ENCODE measurements at regions of chr7 and their contacts with region 1.

Region 1: GRCh38 chr7:116180302-116180701 is 30.0 kb upstream of the TES start:
- DNase-seq: no peak
- ATAC-seq: peak; percentile 88
- H3K4me3 ChIP-seq: no peak overlapping the region
- H3K27ac ChIP-seq: no peak overlapping the region
- H3K4me1 ChIP-seq: no peaks in the 10 kb centered on the region
- H3K27me3 ChIP-seq: no peaks in the 10 kb centered on the region
- CTCF ChIP-seq: peak; percentile 62 to 79 (median 70)
- EP300 ChIP-seq: no peak
- POLR2A ChIP-seq: no peak
- RAD21 ChIP-seq: peak; percentile 85

Region 2: GRCh38 chr7:116138202-116138801 is 42.0 kb before region 1 on chr7:
- CTCF ChIA-PET with region 1: interaction called, 21 read pairs
- POLR2A ChIA-PET with region 1: no interaction called
- RAD21 ChIA-PET with region 1: interaction called, 14 read pairs
- SMC1A ChIA-PET with region 1: interaction called, 7 read pairs
- in situ Hi-C with region 1: no loop called
- intact Hi-C with region 1: no loop called
- DNase-seq: no peak
- ATAC-seq: peak; percentile 99
- H3K4me3 ChIP-seq: no peak overlapping the region
- H3K27ac ChIP-seq: no peak overlapping the region
- H3K4me1 ChIP-seq: no peaks in the 10 kb centered on the region
- H3K27me3 ChIP-seq: no peaks in the 10 kb centered on the region
- CTCF ChIP-seq: peak; percentile 65 to 83 (median 71)
- EP300 ChIP-seq: no peak
- POLR2A ChIP-seq: no peak
- RAD21 ChIP-seq: peak; percentile 99

Region 3: GRCh38 chr7:116165717-116166116 is 14.6 kb before region 1 on chr7:
- CTCF ChIA-PET with region 1: interaction called, 19 read pairs
- POLR2A ChIA-PET with region 1: no interaction called
- RAD21 ChIA-PET with region 1: interaction called, 7 read pairs
- SMC1A ChIA-PET with region 1: interaction called, 6 read pairs
- in situ Hi-C with region 1: no loop called
- intact Hi-C with region 1: no loop called
- DNase-seq: no peak
- ATAC-seq: peak; percentile 83
- H3K4me3 ChIP-seq: no peak overlapping the region
- H3K27ac ChIP-seq: peak overlapping the region; percentile 38
- H3K4me1 ChIP-seq: peaks cover 46% of the 10 kb centered on the region
- H3K27me3 ChIP-seq: no peaks in the 10 kb centered on the region
- CTCF ChIP-seq: no peak
- EP300 ChIP-seq: peak; percentile 34 to 71; a peak in 2 of 4 replicates
- POLR2A ChIP-seq: no peak
- RAD21 ChIP-seq: no peak

Region 4: DNA sequence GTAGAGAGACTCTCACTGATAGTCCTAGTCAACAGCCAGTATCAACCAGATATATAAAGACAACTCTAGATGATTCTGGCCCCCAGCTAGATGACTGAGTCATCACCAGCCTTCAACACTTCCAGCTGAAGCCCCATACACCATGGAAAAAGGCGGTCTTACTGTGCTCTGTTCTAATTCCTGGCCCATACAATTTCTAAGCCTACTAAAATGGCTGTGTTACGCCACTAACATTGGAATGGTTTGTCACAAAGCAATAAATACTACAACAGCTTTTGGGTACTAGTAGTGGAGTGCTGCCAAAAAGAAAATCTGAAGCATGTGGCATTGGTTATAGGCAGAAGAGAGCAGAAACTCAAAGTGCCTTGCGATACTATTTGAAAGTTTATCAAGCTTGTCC is 17.1 kb after region 1 on chr7:
- CTCF ChIA-PET with region 1: interaction called, 10 read pairs
- POLR2A ChIA-PET with region 1: no interaction called
- RAD21 ChIA-PET with region 1: interaction called, 3 read pairs
- SMC1A ChIA-PET with region 1: interaction called, 4 read pairs
- in situ Hi-C with region 1: no loop called
- intact Hi-C with region 1: no loop called
- DNase-seq: no peak
- ATAC-seq: no peak
- H3K4me3 ChIP-seq: no peak overlapping the region
- H3K27ac ChIP-seq: no peak overlapping the region
- H3K4me1 ChIP-seq: no peaks in the 10 kb centered on the region
- H3K27me3 ChIP-seq: no peaks in the 10 kb centered on the region; a peak in 1 of 4 replicates
- CTCF ChIP-seq: no peak
- EP300 ChIP-seq: no peak
- POLR2A ChIP-seq: no peak
- RAD21 ChIP-seq: no peak

Region 5: GRCh38 chr7:116211006-116211912 is 31.0 kb after region 1 on chr7:
- CTCF ChIA-PET with region 1: interaction called, 9 read pairs
- POLR2A ChIA-PET with region 1: no interaction called
- RAD21 ChIA-PET with region 1: interaction called, 5 read pairs
- SMC1A ChIA-PET with region 1: interaction called, 3 read pairs
- in situ Hi-C with region 1: no loop called
- intact Hi-C with region 1: loop called (anchors 2 kb)
- DNase-seq: peak; percentile 59
- ATAC-seq: peak; percentile 78
- H3K4me3 ChIP-seq: peak overlapping the region; percentile 91
- H3K27ac ChIP-seq: peak overlapping the region; percentile 86
- H3K4me1 ChIP-seq: peaks cover 9% of the 10 kb centered on the region
- H3K27me3 ChIP-seq: no peaks in the 10 kb centered on the region
- CTCF ChIP-seq: no peak
- EP300 ChIP-seq: no peak
- POLR2A ChIP-seq: peak; percentile 61; the same call in 1 of the 2 replicates
- RAD21 ChIP-seq: no peak

Region 6: DNA sequence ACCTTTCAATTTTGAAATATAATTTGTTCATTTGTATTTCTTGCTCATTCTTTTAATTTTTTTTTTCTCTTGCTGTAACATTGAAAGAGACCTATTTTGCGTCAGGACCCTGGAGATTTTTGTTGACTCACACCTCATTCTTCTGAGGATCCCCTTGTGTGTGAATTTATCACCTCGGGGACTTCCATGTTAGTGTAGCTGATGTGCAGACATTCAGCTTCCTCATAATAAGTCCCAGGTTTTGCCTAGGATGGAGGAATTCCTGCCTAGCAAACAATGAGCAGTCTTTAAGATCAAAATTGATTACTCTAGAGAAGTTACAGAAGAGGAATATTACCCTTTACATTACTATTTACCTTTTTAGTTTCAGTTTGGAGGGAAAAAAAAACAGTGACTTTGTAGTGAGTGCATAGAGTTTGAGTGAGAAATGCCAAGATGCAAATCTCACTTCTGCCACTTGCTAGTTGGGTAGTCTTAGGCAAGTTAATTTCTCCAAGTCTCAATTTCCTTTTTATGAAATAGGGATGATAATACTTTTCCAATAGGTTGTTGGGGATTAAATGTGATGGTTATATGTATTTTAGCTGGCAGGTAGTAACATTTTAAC is 44.3 kb after region 1 on chr7:
- CTCF ChIA-PET with region 1: interaction called, 76 read pairs
- POLR2A ChIA-PET with region 1: no interaction called
- RAD21 ChIA-PET with region 1: interaction called, 7 read pairs
- SMC1A ChIA-PET with region 1: interaction called, 188 read pairs
- in situ Hi-C with region 1: no loop called
- intact Hi-C with region 1: no loop called
- DNase-seq: no peak
- ATAC-seq: peak; percentile 86
- H3K4me3 ChIP-seq: peak overlapping the region; percentile 53; the same call in 1 of the 2 replicates
- H3K27ac ChIP-seq: peak overlapping the region; percentile 24; the same call in 1 of the 2 replicates
- H3K4me1 ChIP-seq: peaks cover 18% of the 10 kb centered on the region
- H3K27me3 ChIP-seq: no peaks in the 10 kb centered on the region
- CTCF ChIP-seq: no peak
- EP300 ChIP-seq: peak in 1 of 2 experiments; percentile 15; a peak in 1 of 4 replicates
- POLR2A ChIP-seq: no peak
- RAD21 ChIP-seq: no peak

Measured in GM12878 (cell line).